Heart right ventricle (tissue), 16 donors: ENCODE measurements at regions of chr20 and their contacts with region 1.

Region 1: DNA sequence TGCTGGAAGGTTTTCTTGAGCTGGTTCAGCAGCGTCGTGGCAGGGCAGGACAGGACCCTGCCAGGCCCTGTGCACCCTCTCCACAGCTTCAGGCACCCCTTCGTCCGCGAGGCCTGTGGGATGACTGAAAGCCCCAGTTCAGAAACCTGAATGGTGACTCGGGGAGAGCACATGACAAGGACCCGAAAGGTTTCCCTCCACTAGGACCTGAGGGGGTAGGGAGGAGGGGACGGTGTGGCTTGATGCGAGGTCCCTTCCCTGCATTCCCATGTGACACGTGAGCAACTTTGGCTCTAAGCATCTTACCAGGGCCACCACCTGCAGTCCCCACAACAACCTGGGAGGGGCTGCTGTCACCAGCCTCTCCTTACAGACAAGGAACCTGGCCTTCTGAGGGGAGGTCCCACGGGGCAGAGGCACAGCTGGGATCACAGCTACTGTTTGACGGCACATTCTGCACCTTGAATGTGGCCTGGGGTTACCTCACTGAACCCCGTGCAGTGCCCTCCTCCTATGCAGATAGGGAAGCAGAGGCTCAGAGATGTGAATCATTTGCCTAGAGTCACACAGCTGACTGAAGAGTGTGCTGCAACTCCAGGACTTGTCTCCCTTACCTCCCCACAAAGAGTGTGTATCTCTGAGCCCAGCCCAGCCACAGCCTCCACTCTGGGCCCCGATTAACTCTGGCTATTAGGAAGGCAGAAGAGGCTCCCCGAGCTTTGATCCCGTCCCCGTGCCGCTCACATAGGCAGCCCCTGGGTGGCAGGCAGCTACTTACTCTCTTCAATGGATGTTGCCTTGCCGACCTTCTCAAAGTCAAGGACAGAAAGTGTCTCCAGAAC is 84.6 kb downstream of the PTPN1 start:
- DNase-seq: no peak
- ATAC-seq: peak in 1 of 8 donors; percentile 2
- H3K4me3 ChIP-seq: no peak overlapping the region
- H3K27ac ChIP-seq: no peak overlapping the region
- H3K4me1 ChIP-seq: peaks cover 0 to 39% (median 23%) of the 10 kb centered on the region in 9 donors
- H3K27me3 ChIP-seq: peaks cover 0 to 24% (median 0%) of the 10 kb centered on the region in 7 donors
- CTCF ChIP-seq: no peak

Region 2: GRCh38 chr20:50731055-50731871 is 136.5 kb after region 1 on chr20 and contains the start of gene PARD6B:
- intact Hi-C with region 1: loop called in 1 of 10 experiments (anchors 10 kb)
- DNase-seq: peak; percentile 94 to 95
- ATAC-seq: peak; percentile 97 to 99 (median 98)
- H3K4me3 ChIP-seq: peak within 1 kb of the TSS; percentile 50 to 93 (median 84)
- H3K27ac ChIP-seq: peak within 1 kb of the TSS; percentile 59 to 89 (median 82)
- H3K4me1 ChIP-seq: peaks cover 0 to 35% (median 21%) of the 10 kb centered on the region in 9 donors
- H3K27me3 ChIP-seq: peaks cover 0 to 17% (median 3%) of the 10 kb centered on the region in 7 donors
- CTCF ChIP-seq: peak in 1 of 9 donors; percentile 9
- total RNA-seq, gene PARD6B: 1.7 to 7.1 (median 3.7) TPM